CD4-positive, alpha-beta T cell (primary cell): ENCODE measurements at regions of chr1 and their contacts with region 1.

Region 1: GRCh38 chr1:205211169-205211838 is at the start of gene DSTYK:
- DNase-seq: peak; percentile 84 to 95 (median 88)
- ATAC-seq: peak; percentile 92
- H3K4me3 ChIP-seq: peak within 1 kb of the TSS; percentile 99
- H3K4me3 Mint-ChIP-seq: peak within 1 kb of the TSS; percentile 98
- H3K27ac ChIP-seq: peak within 1 kb of the TSS; percentile 67 to 80
- H3K27ac Mint-ChIP-seq: peak within 1 kb of the TSS; percentile 98
- H3K4me1 ChIP-seq: peaks cover 19% of the 10 kb centered on the region
- H3K4me1 Mint-ChIP-seq: peaks cover 57% of the 10 kb centered on the region
- H3K27me3 ChIP-seq: no peaks in the 10 kb centered on the region
- H3K27me3 Mint-ChIP-seq: peaks cover 5% of the 10 kb centered on the region
- CTCF ChIP-seq: no peak
- total RNA-seq, gene DSTYK: 13.9 to 15.3 TPM

Region 2: DNA sequence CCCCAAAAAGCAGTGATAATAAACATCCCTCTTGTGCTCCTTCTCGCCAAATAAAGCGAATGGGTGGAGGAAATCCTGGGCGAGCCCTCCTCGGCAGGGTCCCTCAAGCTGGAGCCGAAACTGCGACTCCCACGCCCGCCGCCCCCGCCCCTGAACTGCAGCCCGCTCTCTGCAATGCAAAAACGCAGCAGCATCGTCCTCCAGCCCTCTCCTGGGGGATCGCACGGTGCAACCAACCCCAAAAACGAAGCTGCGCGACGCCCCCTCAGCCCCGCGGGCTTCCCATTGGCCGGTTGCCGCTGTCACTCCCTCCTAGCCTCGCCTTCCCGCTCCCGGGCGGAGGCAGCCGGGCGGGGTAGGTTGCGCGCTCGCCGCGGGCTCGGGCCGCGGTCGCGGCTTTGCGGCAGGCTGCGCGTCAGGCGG is 16.3 kb after region 1 on chr1 and contains the start of gene TMCC2:
- CTCF ChIA-PET with region 1: interaction called, 3 read pairs
- POLR2A ChIA-PET with region 1: interaction called, 50 read pairs
- intact Hi-C with region 1: loop called (anchors 1 to 2 kb)
- DNase-seq: peak; percentile 49 to 87 (median 74)
- ATAC-seq: peak; percentile 76
- H3K4me3 ChIP-seq: peak within 1 kb of the TSS; percentile 64
- H3K4me3 Mint-ChIP-seq: peak within 1 kb of the TSS; percentile 94
- H3K27ac ChIP-seq: no peak within 1 kb of the TSS
- H3K27ac Mint-ChIP-seq: peak within 1 kb of the TSS; percentile 4
- H3K4me1 ChIP-seq: peaks cover 31% of the 10 kb centered on the region
- H3K4me1 Mint-ChIP-seq: peaks cover 30% of the 10 kb centered on the region
- H3K27me3 ChIP-seq: peaks cover 5 to 8% of the 10 kb centered on the region in 2 experiments
- H3K27me3 Mint-ChIP-seq: peaks cover 22% of the 10 kb centered on the region
- CTCF ChIP-seq: no peak
- total RNA-seq, gene TMCC2: 0.74 to 1.1 TPM